H1 (cell line): ENCODE measurements at regions of chr19 and their contacts with region 1.

Region 1: GRCh38 chr19:32067685-32068084 is 277.7 kb upstream of the ZNF507 start:
- DNase-seq: peak; percentile 15 to 60
- H3K4me3 ChIP-seq: no peak overlapping the region
- H3K27ac ChIP-seq: no peak overlapping the region
- H3K4me1 ChIP-seq: no peaks in the 10 kb centered on the region
- H3K27me3 ChIP-seq: no peaks in the 10 kb centered on the region
- CTCF ChIP-seq: peak; percentile 21 to 52 (median 49)
- EP300 ChIP-seq: no peak
- POLR2A ChIP-seq: no peak
- RAD21 ChIP-seq: peak; percentile 39 to 54

Region 2: GRCh38 chr19:32082028-32082427 is 14.3 kb after region 1 on chr19:
- CTCF ChIA-PET with region 1: interaction called, 19 read pairs
- POLR2A ChIA-PET with region 1: no interaction called
- DNase-seq: no peak
- H3K4me3 ChIP-seq: no peak overlapping the region
- H3K27ac ChIP-seq: no peak overlapping the region
- H3K4me1 ChIP-seq: no peaks in the 10 kb centered on the region
- H3K27me3 ChIP-seq: no peaks in the 10 kb centered on the region
- CTCF ChIP-seq: no peak
- EP300 ChIP-seq: no peak
- POLR2A ChIP-seq: no peak
- RAD21 ChIP-seq: no peak